ENCODE measurements at regions of chr13 and their contacts with region 1.

Region 1: GRCh38 chr13:74930402-74931165 is 551.4 kb downstream of the TBC1D4 start:
- DNase-seq: peak; percentile 54
- H3K4me3 ChIP-seq: no peak overlapping the region
- H3K27ac ChIP-seq: no peak overlapping the region
- H3K4me1 ChIP-seq: peaks cover 5% of the 10 kb centered on the region
- H3K27me3 ChIP-seq: no peaks in the 10 kb centered on the region
- CTCF ChIP-seq: no peak
- POLR2A ChIP-seq: no peak

Region 2: DNA sequence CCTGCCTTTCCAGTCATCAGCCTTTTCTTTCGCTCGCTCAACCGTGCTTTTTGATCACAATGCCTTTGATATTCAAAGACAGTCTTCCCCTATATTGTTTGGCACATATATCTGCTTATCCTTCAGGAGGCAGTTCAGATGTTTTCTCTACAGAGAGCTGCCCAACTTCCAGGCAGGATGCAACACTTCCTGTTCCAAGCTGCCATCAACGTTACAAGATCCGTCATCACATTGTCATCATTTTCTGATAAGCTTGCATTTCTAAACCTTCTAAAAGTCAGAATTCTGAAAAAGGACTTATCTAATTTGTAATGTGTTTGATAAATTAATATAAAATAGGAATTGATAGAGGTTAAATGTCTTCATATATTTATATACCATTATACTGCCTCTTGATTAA is 22.8 kb before region 1 on chr13:
- CTCF ChIA-PET with region 1: no interaction called
- POLR2A ChIA-PET with region 1: no interaction called
- dilution Hi-C with region 1: no loop called
- intact Hi-C with region 1: loop called (anchors 1 kb)
- DNase-seq: peak; percentile 68
- H3K4me3 ChIP-seq: no peak overlapping the region
- H3K27ac ChIP-seq: peak overlapping the region; percentile 45
- H3K4me1 ChIP-seq: peaks cover 23% of the 10 kb centered on the region
- H3K27me3 ChIP-seq: no peaks in the 10 kb centered on the region
- CTCF ChIP-seq: no peak
- POLR2A ChIP-seq: no peak